ENCODE measurements at regions of chr1 and their contacts with region 1.

Region 1: DNA sequence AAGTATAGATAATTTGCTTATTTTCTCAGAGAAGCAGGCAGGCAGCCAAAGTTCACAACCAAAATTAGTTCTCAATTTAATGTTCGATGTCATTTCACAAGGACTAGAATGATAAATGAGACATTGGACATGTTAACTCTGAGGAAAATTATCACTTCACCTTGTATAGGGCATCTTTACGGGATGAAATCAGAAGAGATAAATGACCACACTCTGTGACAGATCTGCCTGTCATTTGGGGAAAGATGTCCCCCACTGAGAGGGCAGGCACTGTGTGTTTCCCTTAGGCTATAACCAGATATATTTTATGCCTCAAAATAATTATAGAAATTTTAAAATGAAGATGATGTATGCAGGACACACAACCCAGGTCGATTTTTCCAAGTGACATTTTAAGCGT is 642.9 kb downstream of the BRINP3 start:
- DNase-seq: no peak
- H3K4me3 ChIP-seq: no peak overlapping the region
- H3K27ac ChIP-seq: no peak overlapping the region
- H3K4me1 ChIP-seq: no peaks in the 10 kb centered on the region
- H3K27me3 ChIP-seq: no peaks in the 10 kb centered on the region
- CTCF ChIP-seq: no peak
- POLR2A ChIP-seq: no peak

Region 2: GRCh38 chr1:189851806-189852367 is 17.1 kb after region 1 on chr1:
- CTCF ChIA-PET with region 1: interaction called, 10 read pairs
- POLR2A ChIA-PET with region 1: no interaction called
- dilution Hi-C with region 1: no loop called
- intact Hi-C with region 1: no loop called
- DNase-seq: no peak
- H3K4me3 ChIP-seq: no peak overlapping the region
- H3K27ac ChIP-seq: no peak overlapping the region
- H3K4me1 ChIP-seq: no peaks in the 10 kb centered on the region
- H3K27me3 ChIP-seq: no peaks in the 10 kb centered on the region
- CTCF ChIP-seq: no peak
- POLR2A ChIP-seq: no peak